ENCODE measurements at regions of chr11 and their contacts with region 1.

Region 1: GRCh38 chr11:44565211-44565952 is at the start of gene CD82:
- DNase-seq: peak; percentile 97 to 99
- H3K4me3 ChIP-seq: peak within 1 kb of the TSS; percentile 50 to 69 (median 60)
- H3K27ac ChIP-seq: no peak within 1 kb of the TSS
- H3K4me1 ChIP-seq: peaks cover 5 to 20% (median 8%) of the 10 kb centered on the region in 4 experiments
- H3K27me3 ChIP-seq: peaks cover 0 to 15% (median 7%) of the 10 kb centered on the region in 4 experiments; a peak in 6 of 7 replicates
- CTCF ChIP-seq: peak in 1 of 3 experiments; percentile 22; a peak in 1 of 4 replicates
- EP300 ChIP-seq: no peak
- POLR2A ChIP-seq: no peak
- RAD21 ChIP-seq: peak in 1 of 2 experiments; percentile 26; a peak in 1 of 4 replicates
- total RNA-seq, gene CD82: 7.9 and 8.6 TPM in 2 replicates

Region 2: GRCh38 chr11:44611687-44612434 is 46.5 kb after region 1 on chr11:
- CTCF ChIA-PET with region 1: interaction called, 182 read pairs
- POLR2A ChIA-PET with region 1: interaction called, 3 read pairs
- DNase-seq: no peak
- H3K4me3 ChIP-seq: no peak overlapping the region
- H3K27ac ChIP-seq: no peak overlapping the region
- H3K4me1 ChIP-seq: peaks cover 0 to 9% (median 1%) of the 10 kb centered on the region in 4 experiments; a peak in 3 of 7 replicates
- H3K27me3 ChIP-seq: no peaks in the 10 kb centered on the region
- CTCF ChIP-seq: no peak
- EP300 ChIP-seq: no peak
- POLR2A ChIP-seq: no peak
- RAD21 ChIP-seq: no peak

Measured in H1 (cell line).